Transverse colon (tissue), 4 donors: ENCODE measurements at regions of chr6 and their contacts with region 1.

Region 1: DNA sequence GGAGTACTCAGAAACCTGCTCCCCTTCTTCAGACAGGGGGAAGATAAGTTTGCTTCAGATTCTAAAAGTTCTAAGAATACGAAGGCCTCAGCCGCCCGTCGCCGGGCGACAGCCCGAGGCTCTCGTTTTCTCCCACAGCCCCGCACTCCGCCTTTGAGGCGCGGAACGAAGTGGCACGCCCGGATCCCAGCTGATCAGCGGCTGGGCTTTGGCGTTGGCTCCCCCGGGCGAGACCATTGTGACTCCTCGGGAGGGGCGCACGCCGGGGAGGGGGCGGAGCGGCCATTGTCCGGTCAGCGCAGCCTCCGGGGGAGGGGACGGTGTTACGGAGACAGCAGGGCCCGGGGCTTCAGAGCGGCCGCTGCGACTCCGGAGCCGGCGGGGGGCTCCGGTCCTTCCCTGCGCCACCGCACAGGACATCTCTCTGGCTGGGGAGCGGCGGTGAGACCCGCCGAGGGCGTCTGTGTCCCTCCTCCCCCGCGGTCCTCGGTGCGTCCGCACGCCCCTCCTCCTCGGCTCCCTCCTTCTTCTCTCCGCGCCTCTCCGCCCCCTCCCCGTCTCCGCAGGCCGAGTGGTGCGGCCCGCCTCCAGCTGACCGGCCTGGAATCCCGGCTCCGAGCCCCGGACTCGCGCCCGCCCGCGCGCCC is at the start of gene ZFAND3:
- DNase-seq: peak; percentile 97
- H3K4me3 ChIP-seq: peak within 1 kb of the TSS; percentile 76 to 99 (median 92)
- H3K27ac ChIP-seq: peak within 1 kb of the TSS; percentile 95 to 99 (median 97)
- H3K4me1 ChIP-seq: peaks cover 32 to 52% (median 47%) of the 10 kb centered on the region in 4 donors
- H3K27me3 ChIP-seq: no peaks in the 10 kb centered on the region
- CTCF ChIP-seq: peak in 2 of 5 experiments; percentile 9 to 25
- EP300 ChIP-seq: no peak
- POLR2A ChIP-seq: peak; percentile 48
- total RNA-seq, gene ZFAND3: 20.5 to 83.4 (median 36.5) TPM

Region 2: DNA sequence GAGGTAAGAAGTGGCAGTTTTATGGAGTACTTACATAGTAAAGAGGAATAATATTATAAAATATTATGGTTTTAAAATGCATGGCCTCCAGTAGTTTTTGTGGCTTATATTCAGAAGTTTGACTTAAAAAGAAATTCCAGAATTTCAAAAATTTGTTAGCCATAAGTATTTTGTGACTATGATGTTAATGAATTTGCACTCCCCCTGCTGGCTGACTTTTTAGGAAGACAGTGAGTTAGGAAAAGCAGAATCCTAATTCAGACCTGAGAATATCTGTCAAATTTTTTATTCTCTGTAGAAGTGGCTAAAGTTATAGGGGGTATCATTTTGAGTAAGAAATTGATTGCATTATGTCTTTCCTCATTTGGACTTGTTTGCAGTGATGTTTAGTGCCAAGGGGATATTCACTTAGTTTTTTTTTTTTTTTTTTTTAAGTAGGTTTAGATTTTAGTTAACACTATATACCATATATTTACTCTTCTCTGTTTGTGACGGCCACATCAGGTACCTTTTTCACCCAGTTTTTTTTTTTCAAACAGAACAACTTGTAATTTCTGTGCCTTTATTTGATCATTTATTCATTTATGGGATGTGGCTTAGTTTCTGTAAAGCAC is 41.0 kb after region 1 on chr6:
- in situ Hi-C with region 1: no loop called
- intact Hi-C with region 1: loop called (anchors 10 kb)
- DNase-seq: no peak
- H3K4me3 ChIP-seq: no peak overlapping the region
- H3K27ac ChIP-seq: no peak overlapping the region
- H3K4me1 ChIP-seq: peaks cover 0 to 6% (median 2%) of the 10 kb centered on the region in 4 donors
- H3K27me3 ChIP-seq: no peaks in the 10 kb centered on the region
- CTCF ChIP-seq: peak; percentile 53 to 59 (median 58)
- EP300 ChIP-seq: no peak
- POLR2A ChIP-seq: no peak

Region 3: GRCh38 chr6:38443352-38444146 is 624.2 kb after region 1 on chr6:
- in situ Hi-C with region 1: no loop called
- intact Hi-C with region 1: no loop called
- DNase-seq: no peak
- H3K4me3 ChIP-seq: no peak overlapping the region
- H3K27ac ChIP-seq: no peak overlapping the region
- H3K4me1 ChIP-seq: no peaks in the 10 kb centered on the region
- H3K27me3 ChIP-seq: no peaks in the 10 kb centered on the region
- CTCF ChIP-seq: no peak
- EP300 ChIP-seq: no peak
- POLR2A ChIP-seq: no peak